ENCODE measurements at regions of chr11 and their contacts with region 1.

Region 1: GRCh38 chr11:91653079-91653754 is 571.4 kb upstream of the FAT3 start:
- DNase-seq: no peak
- H3K4me3 Mint-ChIP-seq: no peak overlapping the region
- H3K27ac Mint-ChIP-seq: no peak overlapping the region
- H3K4me1 Mint-ChIP-seq: no peaks in the 10 kb centered on the region
- H3K27me3 Mint-ChIP-seq: no peaks in the 10 kb centered on the region

Region 2: GRCh38 chr11:91688672-91689071 is 35.5 kb after region 1 on chr11:
- intact Hi-C with region 1: loop called (anchors 1 kb)
- DNase-seq: no peak
- H3K4me3 Mint-ChIP-seq: no peak overlapping the region
- H3K27ac Mint-ChIP-seq: no peak overlapping the region
- H3K4me1 Mint-ChIP-seq: no peaks in the 10 kb centered on the region
- H3K27me3 Mint-ChIP-seq: no peaks in the 10 kb centered on the region

Region 3: GRCh38 chr11:91880660-91881059 is 227.4 kb after region 1 on chr11:
- intact Hi-C with region 1: no loop called
- DNase-seq: no peak
- H3K4me3 Mint-ChIP-seq: no peak overlapping the region
- H3K27ac Mint-ChIP-seq: no peak overlapping the region
- H3K4me1 Mint-ChIP-seq: no peaks in the 10 kb centered on the region
- H3K27me3 Mint-ChIP-seq: peaks cover 2% of the 10 kb centered on the region

Region 4: GRCh38 chr11:92070026-92070889 is 417.0 kb after region 1 on chr11:
- intact Hi-C with region 1: no loop called
- DNase-seq: no peak
- H3K4me3 Mint-ChIP-seq: no peak overlapping the region
- H3K27ac Mint-ChIP-seq: no peak overlapping the region
- H3K4me1 Mint-ChIP-seq: no peaks in the 10 kb centered on the region
- H3K27me3 Mint-ChIP-seq: no peaks in the 10 kb centered on the region